ENCODE measurements at regions of chr19 and their contacts with region 1.

Region 1: DNA sequence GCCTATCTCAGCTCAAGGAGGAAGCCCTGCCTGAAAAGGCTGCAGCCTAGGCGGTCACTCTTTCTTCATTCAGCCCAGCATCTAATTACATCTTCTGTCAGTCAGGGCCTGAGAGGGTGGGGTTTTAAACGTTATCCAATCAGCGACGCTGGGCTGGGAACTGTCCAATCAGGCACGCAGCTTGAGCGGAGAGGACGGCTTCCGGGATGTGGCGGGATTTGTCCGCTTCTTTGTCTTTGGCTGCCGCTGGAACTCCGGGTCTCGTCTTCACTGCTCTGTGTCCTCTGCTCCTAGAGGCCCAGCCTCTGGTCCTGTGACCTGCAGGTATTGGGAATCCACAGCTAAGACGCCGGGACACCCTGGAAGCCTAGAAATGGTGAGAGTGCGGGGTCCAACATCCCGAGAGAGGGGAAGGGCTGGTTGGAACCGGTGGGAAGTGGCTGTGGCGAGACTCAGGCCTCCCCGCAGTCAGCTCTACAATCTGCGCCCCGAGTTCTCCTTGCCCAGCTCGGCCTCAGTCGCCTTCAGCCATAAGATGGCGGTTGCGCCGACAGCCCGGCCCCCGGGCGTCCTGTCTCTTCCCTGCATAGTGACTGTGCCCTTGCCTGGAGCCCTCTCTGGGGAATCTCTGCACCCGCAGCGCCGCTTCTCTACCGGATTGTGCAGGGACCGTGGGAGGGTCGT is at the start of gene ZNF738:
- DNase-seq: peak; percentile 78
- H3K4me3 ChIP-seq: peak within 1 kb of the TSS; percentile 74
- CTCF ChIP-seq: no peak

Region 2: DNA sequence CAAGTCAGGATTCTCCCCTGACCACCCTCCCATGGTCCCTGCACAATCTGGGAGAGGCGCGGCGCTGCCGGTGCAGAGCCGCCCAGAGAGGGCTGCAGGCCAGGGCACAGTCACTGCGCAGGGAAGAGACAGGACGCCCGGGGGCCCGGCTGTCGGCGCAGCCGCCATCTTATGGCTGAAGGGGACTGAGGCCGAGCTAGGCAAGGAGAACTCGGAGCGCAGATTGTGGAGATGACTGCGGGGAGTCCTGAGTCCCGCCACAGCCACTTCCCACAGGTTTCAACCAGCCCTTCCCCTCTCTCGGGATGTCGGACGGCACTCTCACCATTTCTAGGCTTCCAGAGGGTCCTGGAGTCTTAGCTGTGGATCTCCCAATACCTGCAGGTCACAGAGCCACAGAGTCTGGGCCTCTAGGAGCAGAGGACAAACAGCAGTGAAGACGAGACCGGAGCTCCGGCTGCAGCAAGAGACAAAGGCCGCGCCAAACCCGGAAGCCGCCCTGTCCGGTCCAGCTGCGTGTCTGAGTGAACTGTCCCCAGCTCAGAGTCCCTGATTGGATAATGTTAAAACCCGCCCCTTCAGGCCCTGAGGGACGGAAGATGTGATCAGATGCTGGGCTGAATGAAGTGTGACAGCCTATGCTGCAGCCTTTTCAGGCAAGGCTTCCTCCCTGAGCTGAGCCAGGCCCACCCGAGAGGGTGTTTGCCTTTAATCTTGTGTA is 29.9 kb before region 1 on chr19 and contains the start of gene ZNF708:
- CTCF ChIA-PET with region 1: interaction called, 3 read pairs
- POLR2A ChIA-PET with region 1: interaction called, 11 read pairs
- DNase-seq: peak; percentile 57
- H3K4me3 ChIP-seq: peak within 1 kb of the TSS; percentile 95
- CTCF ChIP-seq: no peak

Measured in AG04449 (cell line).